T-cell (primary cell): ENCODE measurements at regions of chr11 and their contacts with region 1.

Region 1: DNA sequence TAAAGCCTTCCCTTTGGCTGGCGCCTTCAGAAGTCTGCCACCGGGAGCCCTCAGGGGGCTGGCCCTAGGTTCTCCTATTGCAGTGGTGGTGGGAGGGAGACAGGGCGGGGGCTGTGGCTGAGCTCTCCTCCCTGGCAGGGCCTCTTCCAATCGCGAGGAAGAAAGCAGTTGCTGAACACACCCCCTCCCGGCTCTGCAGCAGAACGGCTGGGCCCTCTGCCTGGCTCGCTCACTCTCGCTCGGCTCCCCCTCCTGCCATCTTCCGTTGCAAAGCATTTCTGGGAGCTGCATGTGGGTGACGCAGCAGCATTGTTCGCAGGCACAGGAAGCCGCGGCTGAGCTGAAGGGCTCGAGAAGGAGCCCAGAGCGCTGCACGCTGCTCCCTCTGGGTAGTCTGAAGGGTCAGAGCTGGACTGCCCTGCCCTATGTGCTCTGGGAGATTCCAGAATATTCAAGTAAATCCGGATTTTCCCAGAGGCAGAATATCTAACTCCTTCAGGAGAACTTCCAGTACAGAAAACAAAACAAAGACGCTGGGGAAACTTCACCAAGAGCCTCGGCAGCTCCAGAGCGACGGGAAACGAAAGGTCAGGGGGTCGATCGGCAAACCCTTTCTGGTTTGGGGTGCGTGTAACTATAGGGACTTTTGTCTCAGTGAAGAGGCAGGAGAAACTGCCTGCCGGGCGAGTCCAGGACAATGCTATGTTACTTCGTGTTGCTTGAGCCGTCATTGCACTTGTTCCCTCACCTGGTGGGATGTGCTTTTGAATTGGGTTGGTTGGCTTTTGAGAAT is 26.3 kb upstream of the GRK2 start:
- DNase-seq: peak; percentile 83 to 99 (median 98)
- ATAC-seq: peak; percentile 88 to 97 (median 94)
- H3K4me3 ChIP-seq: peak overlapping the region; percentile 87 to 91
- H3K4me3 Mint-ChIP-seq: peak overlapping the region; percentile 99 to 100 (median 100)
- H3K27ac ChIP-seq: peak overlapping the region; percentile 98
- H3K27ac Mint-ChIP-seq: peak overlapping the region; percentile 99 to 100
- H3K4me1 ChIP-seq: peaks cover 31 to 49% of the 10 kb centered on the region in 2 experiments
- H3K4me1 Mint-ChIP-seq: peaks cover 51 to 59% (median 55%) of the 10 kb centered on the region in 3 donors
- H3K27me3 ChIP-seq: no peaks in the 10 kb centered on the region
- H3K27me3 Mint-ChIP-seq: no peaks in the 10 kb centered on the region

Region 2: GRCh38 chr11:67202045-67202444 is 37.9 kb before region 1 on chr11:
- CTCF ChIA-PET with region 1: no interaction called
- POLR2A ChIA-PET with region 1: no interaction called
- DNase-seq: no peak
- ATAC-seq: no peak
- H3K4me3 ChIP-seq: no peak overlapping the region
- H3K4me3 Mint-ChIP-seq: no peak overlapping the region
- H3K27ac ChIP-seq: no peak overlapping the region
- H3K27ac Mint-ChIP-seq: no peak overlapping the region
- H3K4me1 ChIP-seq: no peaks in the 10 kb centered on the region
- H3K4me1 Mint-ChIP-seq: no peaks in the 10 kb centered on the region
- H3K27me3 ChIP-seq: no peaks in the 10 kb centered on the region
- H3K27me3 Mint-ChIP-seq: no peaks in the 10 kb centered on the region

Region 3: GRCh38 chr11:67583247-67584204 is 343.5 kb after region 1 on chr11 and contains the start of gene GSTP1:
- CTCF ChIA-PET with region 1: no interaction called
- POLR2A ChIA-PET with region 1: interaction called in 1 of 2 experiments, 10 read pairs
- DNase-seq: peak; percentile 25 to 85 (median 62)
- ATAC-seq: peak; percentile 83 to 89 (median 87)
- H3K4me3 ChIP-seq: peak within 1 kb of the TSS; percentile 62 to 81
- H3K4me3 Mint-ChIP-seq: peak within 1 kb of the TSS; percentile 85 to 93 (median 86)
- H3K27ac ChIP-seq: peak within 1 kb of the TSS; percentile 76
- H3K27ac Mint-ChIP-seq: peak within 1 kb of the TSS; percentile 94
- H3K4me1 ChIP-seq: peaks cover 5 to 33% of the 10 kb centered on the region in 2 experiments
- H3K4me1 Mint-ChIP-seq: peaks cover 43 to 56% (median 47%) of the 10 kb centered on the region in 3 donors
- H3K27me3 ChIP-seq: peaks cover 0 to 9% of the 10 kb centered on the region in 2 experiments
- H3K27me3 Mint-ChIP-seq: peaks cover 0 to 5% of the 10 kb centered on the region in 2 donors
- total RNA-seq, gene GSTP1: 68.3 to 200 (median 151) TPM